Naive thymus-derived CD4-positive, alpha-beta T cell (primary cell): ENCODE measurements at regions of chr11 and their contacts with region 1.

Region 1: DNA sequence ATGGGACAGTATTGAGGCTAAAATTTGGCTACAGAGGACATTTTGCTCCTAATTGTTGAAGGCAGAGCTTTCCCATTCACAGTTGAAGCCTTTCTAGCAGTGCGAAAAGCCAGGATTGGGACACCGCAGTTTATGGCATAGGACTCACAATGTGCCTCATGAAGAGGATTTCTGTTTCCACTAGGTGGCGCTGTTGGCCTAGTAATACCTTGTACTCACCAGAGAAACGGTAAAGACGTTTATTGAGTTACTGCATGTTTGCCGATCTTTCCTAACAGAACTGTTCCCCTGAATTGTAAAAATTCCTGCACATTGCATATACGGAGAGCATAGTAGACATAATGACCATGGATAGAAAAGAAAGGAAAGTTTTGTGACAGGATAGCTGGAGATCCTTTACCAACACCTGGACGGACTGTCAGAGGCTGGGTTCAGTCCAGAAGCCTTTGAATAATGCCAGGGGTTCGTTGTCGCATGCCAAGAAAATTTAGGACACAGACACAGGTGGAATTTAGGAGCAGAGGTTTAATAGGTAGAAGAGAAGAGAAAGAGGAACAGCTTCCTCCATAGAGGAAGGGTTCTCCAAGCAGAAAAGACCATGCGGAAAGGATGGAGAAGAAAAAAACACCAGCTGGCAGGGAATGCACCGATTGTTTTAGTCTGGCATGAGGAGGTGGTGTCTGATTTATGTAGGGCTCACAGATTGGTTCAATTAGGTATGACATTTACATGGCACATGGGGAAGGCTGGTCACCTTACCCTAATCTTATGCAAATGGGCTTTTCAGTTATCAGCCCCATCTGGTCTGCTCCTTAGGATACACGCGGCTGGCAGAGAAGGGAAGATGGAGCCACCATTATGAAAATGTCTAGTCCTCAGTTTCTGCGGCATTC is 10.8 kb upstream of the OR51D1 start:
- DNase-seq: peak in 6 of 9 donors; percentile 8 to 57 (median 20)
- ATAC-seq: no peak
- H3K4me3 ChIP-seq: no peak overlapping the region
- H3K4me3 Mint-ChIP-seq: no peak overlapping the region
- H3K27ac ChIP-seq: no peak overlapping the region
- H3K27ac Mint-ChIP-seq: peak overlapping the region in 1 of 9 donors; percentile 26
- H3K4me1 ChIP-seq: no peaks in the 10 kb centered on the region
- H3K4me1 Mint-ChIP-seq: no peaks in the 10 kb centered on the region
- H3K27me3 ChIP-seq: no peaks in the 10 kb centered on the region
- H3K27me3 Mint-ChIP-seq: peaks cover 35 to 52% (median 43%) of the 10 kb centered on the region in 5 donors

Region 2: GRCh38 chr11:4865855-4866254 is 239.4 kb after region 1 on chr11:
- CTCF ChIA-PET with region 1: no interaction called
- POLR2A ChIA-PET with region 1: no interaction called
- intact Hi-C with region 1: no loop called
- DNase-seq: no peak
- ATAC-seq: no peak
- H3K4me3 ChIP-seq: no peak overlapping the region
- H3K4me3 Mint-ChIP-seq: no peak overlapping the region
- H3K27ac ChIP-seq: no peak overlapping the region
- H3K27ac Mint-ChIP-seq: no peak overlapping the region
- H3K4me1 ChIP-seq: no peaks in the 10 kb centered on the region
- H3K4me1 Mint-ChIP-seq: no peaks in the 10 kb centered on the region
- H3K27me3 ChIP-seq: no peaks in the 10 kb centered on the region
- H3K27me3 Mint-ChIP-seq: peaks cover 0 to 4% (median 0%) of the 10 kb centered on the region in 5 donors

Region 3: GRCh38 chr11:5380740-5381342 is 754.4 kb after region 1 on chr11:
- CTCF ChIA-PET with region 1: no interaction called
- POLR2A ChIA-PET with region 1: no interaction called
- intact Hi-C with region 1: loop called in 1 of 2 experiments (anchors 5 kb)
- DNase-seq: peak in 3 of 9 donors; percentile 1 to 23 (median 3)
- ATAC-seq: peak; percentile 26
- H3K4me3 ChIP-seq: no peak overlapping the region
- H3K4me3 Mint-ChIP-seq: no peak overlapping the region
- H3K27ac ChIP-seq: no peak overlapping the region
- H3K27ac Mint-ChIP-seq: no peak overlapping the region
- H3K4me1 ChIP-seq: no peaks in the 10 kb centered on the region
- H3K4me1 Mint-ChIP-seq: no peaks in the 10 kb centered on the region
- H3K27me3 ChIP-seq: no peaks in the 10 kb centered on the region
- H3K27me3 Mint-ChIP-seq: peaks cover 0 to 13% (median 4%) of the 10 kb centered on the region in 5 donors